ENCODE measurements at regions of chr7 and their contacts with region 1.

Region 1: DNA sequence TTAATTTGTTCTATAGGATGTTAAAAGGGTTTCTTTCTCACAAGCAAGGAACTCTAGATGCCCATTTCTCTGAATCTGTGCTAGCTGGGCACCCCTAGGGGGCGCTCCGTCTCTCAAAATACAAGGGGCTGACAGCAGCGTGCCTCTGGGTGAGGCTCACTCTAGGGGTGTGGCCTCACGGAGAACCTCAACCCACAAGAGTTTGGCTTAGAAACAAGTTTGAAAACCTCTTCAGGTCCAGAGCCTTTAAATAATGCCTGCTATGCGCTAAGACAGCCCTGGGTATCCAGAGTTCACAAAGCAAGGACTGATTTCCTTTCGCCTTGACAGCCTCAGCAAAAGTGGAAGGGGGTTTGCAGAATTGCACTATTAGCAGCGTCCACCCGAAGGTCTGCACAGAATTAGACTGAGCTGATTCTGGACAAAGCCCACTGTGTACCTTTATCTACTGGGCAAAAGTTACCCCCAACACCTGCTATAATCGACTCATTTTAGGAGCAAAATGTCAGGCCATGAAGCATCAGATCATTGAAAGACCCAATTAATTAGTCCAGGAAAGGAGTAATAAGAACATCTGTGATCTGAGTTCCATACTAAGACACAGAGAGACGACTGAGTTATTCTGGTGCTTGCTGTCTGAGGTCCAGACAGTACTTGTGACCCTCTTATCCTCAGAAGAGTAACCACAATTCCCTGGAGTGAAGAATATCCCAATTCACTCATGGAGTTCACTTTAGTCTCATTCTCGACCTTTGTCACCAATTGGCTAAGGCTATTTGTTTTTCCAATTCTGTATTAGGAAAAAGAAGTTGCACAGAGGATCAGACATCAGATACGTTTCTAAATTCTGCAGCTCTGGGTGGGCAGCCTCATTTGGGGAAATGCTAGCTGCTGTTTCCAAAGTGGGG is 574 bp upstream of the CPED1 start:
- DNase-seq: peak; percentile 76 to 94
- ATAC-seq: peak; percentile 96 to 98 (median 97)
- H3K4me3 ChIP-seq: peak overlapping the region; percentile 33
- H3K4me3 Mint-ChIP-seq: peak overlapping the region; percentile 85
- H3K27ac ChIP-seq: no peak overlapping the region
- H3K27ac Mint-ChIP-seq: peak overlapping the region in 1 of 2 donors; percentile 14
- H3K4me1 ChIP-seq: peaks cover 13% of the 10 kb centered on the region
- H3K4me1 Mint-ChIP-seq: peaks cover 22 to 26% of the 10 kb centered on the region in 2 donors
- H3K27me3 ChIP-seq: peaks cover 28% of the 10 kb centered on the region
- H3K27me3 Mint-ChIP-seq: peaks cover 36 to 53% of the 10 kb centered on the region in 2 donors
- CTCF ChIP-seq: peak; percentile 95

Region 2: DNA sequence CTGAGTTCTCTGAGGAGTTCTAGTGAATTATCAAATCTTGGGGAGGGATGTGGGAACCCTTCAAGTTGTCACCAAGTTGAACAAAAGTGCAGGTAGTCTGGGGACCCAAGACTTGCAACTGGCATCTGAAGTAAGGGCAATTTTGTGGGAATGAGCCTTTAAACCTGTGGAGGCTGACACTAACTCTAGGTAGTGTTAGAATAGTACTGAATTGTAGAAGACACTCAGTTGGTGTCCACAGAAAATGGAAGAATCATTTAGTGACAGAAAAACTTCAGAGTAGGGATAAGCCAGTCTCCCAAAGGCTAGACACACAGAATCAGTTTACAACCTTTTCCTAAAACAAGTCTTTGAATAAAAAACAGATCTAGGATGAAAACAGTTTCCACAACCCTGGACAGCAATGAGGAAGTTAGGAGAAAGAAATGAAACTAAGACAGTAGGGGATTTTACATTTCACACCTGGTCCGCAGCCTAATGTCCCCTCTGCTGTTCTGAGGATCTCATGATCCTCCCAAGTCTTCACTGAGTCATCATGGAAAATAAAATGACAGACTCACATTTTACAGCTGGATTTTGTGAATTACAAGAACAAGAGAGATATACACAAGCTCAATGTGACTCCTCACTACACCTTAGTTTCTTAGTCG is 60.4 kb before region 1 on chr7:
- intact Hi-C with region 1: loop called (anchors 10 kb)
- DNase-seq: no peak
- ATAC-seq: no peak
- H3K4me3 ChIP-seq: no peak overlapping the region
- H3K4me3 Mint-ChIP-seq: no peak overlapping the region
- H3K27ac ChIP-seq: no peak overlapping the region
- H3K27ac Mint-ChIP-seq: no peak overlapping the region
- H3K4me1 ChIP-seq: no peaks in the 10 kb centered on the region
- H3K4me1 Mint-ChIP-seq: peaks cover 0 to 5% of the 10 kb centered on the region in 2 donors
- H3K27me3 ChIP-seq: peaks cover 2% of the 10 kb centered on the region
- H3K27me3 Mint-ChIP-seq: peaks cover 23 to 45% of the 10 kb centered on the region in 2 donors
- CTCF ChIP-seq: no peak

Region 3: DNA sequence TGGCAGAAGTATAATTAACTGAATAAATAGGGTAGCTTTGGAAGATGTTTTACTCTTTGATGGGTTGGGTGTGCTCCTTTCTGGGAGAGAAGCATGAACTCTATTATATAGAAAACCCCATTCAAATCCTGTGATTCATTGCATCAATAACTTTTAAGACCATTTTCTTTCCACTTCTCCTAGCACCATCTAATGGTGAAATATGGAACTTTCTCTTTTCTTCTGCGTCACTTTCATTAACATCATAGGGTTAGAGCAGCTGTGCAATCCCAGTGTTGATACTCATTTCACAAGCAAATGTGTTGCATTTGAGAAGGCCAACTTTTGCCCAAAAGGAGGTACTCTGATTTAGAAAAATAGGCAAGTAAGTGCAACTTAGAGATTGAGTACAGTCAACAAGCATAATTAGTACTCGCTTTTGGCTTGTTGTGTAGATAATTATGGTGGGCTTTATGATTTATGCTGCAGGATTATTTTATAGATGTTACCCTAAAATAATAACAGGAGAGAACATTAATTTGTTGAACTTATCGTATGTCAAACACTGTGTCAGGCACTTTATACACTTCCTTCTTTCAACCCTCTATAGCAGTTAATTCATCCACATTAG is 93.5 kb after region 1 on chr7:
- intact Hi-C with region 1: loop called (anchors 1 kb)
- DNase-seq: peak in 1 of 2 donors; percentile 67
- ATAC-seq: peak; percentile 50 to 59 (median 59)
- H3K4me3 ChIP-seq: no peak overlapping the region
- H3K4me3 Mint-ChIP-seq: no peak overlapping the region
- H3K27ac ChIP-seq: no peak overlapping the region
- H3K27ac Mint-ChIP-seq: no peak overlapping the region
- H3K4me1 ChIP-seq: no peaks in the 10 kb centered on the region
- H3K4me1 Mint-ChIP-seq: no peaks in the 10 kb centered on the region
- H3K27me3 ChIP-seq: no peaks in the 10 kb centered on the region
- H3K27me3 Mint-ChIP-seq: peaks cover 0 to 6% of the 10 kb centered on the region in 2 donors
- CTCF ChIP-seq: peak; percentile 62

Region 4: GRCh38 chr7:121107923-121108498 is 120.1 kb after region 1 on chr7:
- intact Hi-C with region 1: loop called (anchors 1 kb)
- DNase-seq: peak in 1 of 2 donors; percentile 69
- ATAC-seq: peak in 2 of 3 donors; percentile 72 to 82
- H3K4me3 ChIP-seq: no peak overlapping the region
- H3K4me3 Mint-ChIP-seq: no peak overlapping the region
- H3K27ac ChIP-seq: no peak overlapping the region
- H3K27ac Mint-ChIP-seq: no peak overlapping the region
- H3K4me1 ChIP-seq: no peaks in the 10 kb centered on the region
- H3K4me1 Mint-ChIP-seq: no peaks in the 10 kb centered on the region
- H3K27me3 ChIP-seq: peaks cover 2% of the 10 kb centered on the region
- H3K27me3 Mint-ChIP-seq: no peaks in the 10 kb centered on the region
- CTCF ChIP-seq: peak; percentile 90

Region 5: DNA sequence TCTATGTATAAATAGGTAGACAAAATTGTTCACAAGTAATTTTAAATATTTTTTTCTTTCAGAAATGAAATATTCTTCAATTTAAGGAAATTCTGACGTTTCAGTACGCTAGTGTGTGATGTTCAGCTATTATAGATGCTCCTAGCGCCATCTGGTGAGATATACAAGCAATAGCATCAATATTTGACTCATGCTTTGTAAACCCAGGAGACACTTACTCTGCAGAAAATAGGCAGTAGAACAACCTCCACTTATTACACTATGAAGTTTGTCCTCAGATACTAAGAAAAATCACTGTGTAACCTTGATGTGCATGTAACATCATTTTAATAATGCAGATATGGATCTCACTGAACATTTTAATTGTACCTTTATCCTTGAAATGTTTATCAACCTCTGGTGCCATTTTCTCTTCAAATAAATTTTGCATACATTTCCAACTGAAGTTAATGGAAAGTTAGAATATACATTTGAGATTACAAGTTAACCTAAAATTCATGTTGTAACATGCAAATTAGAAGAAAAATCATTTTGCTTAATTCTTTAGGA is 559.7 kb after region 1 on chr7:
- intact Hi-C with region 1: loop called (anchors 10 kb)
- DNase-seq: peak in 1 of 2 donors; percentile 77
- ATAC-seq: peak; percentile 82 to 94 (median 82)
- H3K4me3 ChIP-seq: no peak overlapping the region
- H3K4me3 Mint-ChIP-seq: no peak overlapping the region
- H3K27ac ChIP-seq: no peak overlapping the region
- H3K27ac Mint-ChIP-seq: no peak overlapping the region
- H3K4me1 ChIP-seq: peaks cover 3% of the 10 kb centered on the region
- H3K4me1 Mint-ChIP-seq: peaks cover 31 to 34% of the 10 kb centered on the region in 2 donors
- H3K27me3 ChIP-seq: no peaks in the 10 kb centered on the region
- H3K27me3 Mint-ChIP-seq: no peaks in the 10 kb centered on the region
- CTCF ChIP-seq: peak; percentile 92

Region 6: DNA sequence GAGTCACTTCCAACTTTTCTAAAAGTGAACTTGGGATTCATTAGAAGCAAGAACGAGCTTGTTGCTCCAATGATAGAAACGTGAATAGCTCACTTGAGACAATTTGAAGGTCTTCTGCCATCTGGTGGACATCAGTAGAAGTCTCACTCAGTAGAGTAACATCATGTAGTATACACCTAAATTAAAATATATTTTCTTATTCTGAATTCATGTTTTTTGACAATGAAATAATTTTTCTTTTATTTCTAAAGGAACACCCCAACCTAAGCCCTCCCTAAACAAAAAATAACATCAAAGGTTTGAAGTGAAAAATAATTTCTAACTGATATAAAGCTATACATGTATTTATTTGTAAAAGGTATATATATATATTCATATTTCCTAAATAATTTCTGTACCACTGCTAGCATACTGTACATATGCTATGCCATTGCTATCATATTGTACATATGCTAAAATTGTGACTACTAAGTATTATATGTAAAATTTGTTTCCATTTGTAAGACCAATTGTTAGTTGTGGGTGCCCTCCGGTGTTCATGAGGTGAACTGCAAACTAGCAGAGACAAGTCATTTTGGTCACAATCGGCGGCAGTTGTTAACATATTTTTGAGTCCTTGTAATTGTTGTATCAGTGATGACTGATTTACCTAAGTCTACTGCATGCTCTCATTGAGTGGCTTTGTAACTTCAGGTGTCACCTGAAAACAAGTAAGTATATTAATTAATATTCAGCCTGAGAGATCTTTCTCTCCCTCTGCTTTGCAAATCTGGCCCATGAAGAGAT is 1006.9 kb after region 1 on chr7:
- intact Hi-C with region 1: loop called (anchors 2 kb)
- DNase-seq: peak in 1 of 2 donors; percentile 37
- ATAC-seq: peak; percentile 52 to 76 (median 70)
- H3K4me3 ChIP-seq: no peak overlapping the region
- H3K4me3 Mint-ChIP-seq: no peak overlapping the region
- H3K27ac ChIP-seq: no peak overlapping the region
- H3K27ac Mint-ChIP-seq: no peak overlapping the region
- H3K4me1 ChIP-seq: no peaks in the 10 kb centered on the region
- H3K4me1 Mint-ChIP-seq: no peaks in the 10 kb centered on the region
- H3K27me3 ChIP-seq: no peaks in the 10 kb centered on the region
- H3K27me3 Mint-ChIP-seq: no peaks in the 10 kb centered on the region
- CTCF ChIP-seq: peak; percentile 69